Ovary (tissue), 10 donors: ENCODE measurements at regions of chr11 and their contacts with region 1.

Region 1: DNA sequence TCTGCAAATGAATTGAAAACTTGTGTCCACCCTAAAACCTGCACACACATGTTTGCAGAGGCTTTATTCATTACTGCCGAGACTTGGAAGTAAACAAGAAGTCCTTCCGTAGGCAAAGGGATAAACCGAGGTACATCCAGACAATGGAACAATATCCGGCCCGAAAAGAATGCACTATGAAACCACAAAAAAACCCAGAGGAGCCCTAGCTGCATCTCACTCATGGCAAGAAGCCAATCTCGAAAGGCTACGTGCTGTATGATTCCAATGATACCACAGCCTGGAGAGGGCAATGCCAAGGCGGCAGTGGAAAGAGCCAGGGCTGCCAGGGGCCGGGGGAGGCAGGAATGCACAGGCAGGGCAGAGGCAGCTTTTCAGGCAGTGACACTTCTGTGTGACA is 3.2 kb upstream of the MRPL23 start:
- DNase-seq: peak in 4 of 5 donors; percentile 6 to 26 (median 14)
- H3K4me3 ChIP-seq: no peak overlapping the region
- H3K27ac ChIP-seq: no peak overlapping the region
- H3K4me1 ChIP-seq: peaks cover 1% of the 10 kb centered on the region
- H3K27me3 ChIP-seq: no peaks in the 10 kb centered on the region
- CTCF ChIP-seq: no peak
- EP300 ChIP-seq: no peak
- POLR2A ChIP-seq: no peak

Region 2: GRCh38 chr11:1889224-1890120 is 54.5 kb before region 1 on chr11:
- intact Hi-C with region 1: loop called in 2 of 4 experiments (anchors 10 kb)
- DNase-seq: peak in 2 of 5 donors; percentile 11 to 35
- H3K4me3 ChIP-seq: no peak overlapping the region
- H3K27ac ChIP-seq: no peak overlapping the region
- H3K4me1 ChIP-seq: no peaks in the 10 kb centered on the region
- H3K27me3 ChIP-seq: no peaks in the 10 kb centered on the region
- CTCF ChIP-seq: no peak
- EP300 ChIP-seq: no peak
- POLR2A ChIP-seq: no peak

Region 3: DNA sequence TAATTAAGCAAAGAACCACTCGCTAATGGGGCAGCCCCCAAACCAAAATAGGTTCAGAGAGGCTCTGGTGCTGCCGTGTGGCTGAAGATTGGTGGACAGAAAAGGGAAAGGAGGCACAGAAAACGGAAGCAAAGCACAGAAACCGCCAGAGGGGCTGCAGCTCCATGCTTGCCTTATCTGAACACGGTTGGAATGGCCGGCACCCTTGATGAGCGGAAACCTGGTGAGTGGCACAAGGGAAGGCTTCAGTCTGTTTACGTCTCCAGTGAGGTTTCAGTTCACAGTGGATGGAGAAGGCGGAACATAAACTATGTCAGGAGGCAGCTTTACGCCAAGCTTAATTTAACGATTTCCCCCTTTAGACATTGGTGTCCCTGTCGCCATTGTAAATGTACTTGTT is 47.1 kb before region 1 on chr11:
- intact Hi-C with region 1: loop called in 3 of 4 experiments (anchors 5 to 10 kb)
- DNase-seq: peak in 1 of 5 donors; percentile 2
- H3K4me3 ChIP-seq: no peak overlapping the region
- H3K27ac ChIP-seq: no peak overlapping the region
- H3K4me1 ChIP-seq: no peaks in the 10 kb centered on the region
- H3K27me3 ChIP-seq: no peaks in the 10 kb centered on the region
- CTCF ChIP-seq: no peak
- EP300 ChIP-seq: no peak
- POLR2A ChIP-seq: no peak

Region 4: GRCh38 chr11:1908618-1909017 is 35.4 kb before region 1 on chr11:
- intact Hi-C with region 1: loop called in 1 of 4 experiments (anchors 1 kb)
- DNase-seq: peak in 1 of 5 donors; percentile 6
- H3K4me3 ChIP-seq: no peak overlapping the region
- H3K27ac ChIP-seq: no peak overlapping the region
- H3K4me1 ChIP-seq: peaks cover 11% of the 10 kb centered on the region
- H3K27me3 ChIP-seq: no peaks in the 10 kb centered on the region
- CTCF ChIP-seq: no peak
- EP300 ChIP-seq: no peak
- POLR2A ChIP-seq: no peak